Activated CD4-positive, alpha-beta T cell treated with anti-CD3 and anti-CD28 coated beads for 36 hours (primary cell): ENCODE measurements at regions of chr15 and their contacts with region 1.

Region 1: GRCh38 chr15:34987985-34988873 is at the start of gene ZNF770:
- DNase-seq: peak; percentile 88
- ATAC-seq: peak; percentile 87
- H3K4me3 Mint-ChIP-seq: peak within 1 kb of the TSS; percentile 97
- H3K27ac Mint-ChIP-seq: peak within 1 kb of the TSS; percentile 98
- H3K4me1 Mint-ChIP-seq: peaks cover 35% of the 10 kb centered on the region
- H3K27me3 Mint-ChIP-seq: no peaks in the 10 kb centered on the region
- total RNA-seq, gene ZNF770: 64.1 to 65.1 TPM

Region 2: GRCh38 chr15:34337557-34338306 is 650.5 kb before region 1 on chr15 and contains the start of gene SLC12A6:
- CTCF ChIA-PET with region 1: no interaction called
- POLR2A ChIA-PET with region 1: no interaction called
- intact Hi-C with region 1: loop called in 1 of 2 experiments (anchors 5 kb)
- DNase-seq: peak; percentile 95
- ATAC-seq: peak; percentile 82
- H3K4me3 Mint-ChIP-seq: peak within 1 kb of the TSS; percentile 83
- H3K27ac Mint-ChIP-seq: peak within 1 kb of the TSS; percentile 97
- H3K4me1 Mint-ChIP-seq: peaks cover 67% of the 10 kb centered on the region
- H3K27me3 Mint-ChIP-seq: no peaks in the 10 kb centered on the region
- total RNA-seq, gene SLC12A6: 18.2 to 22.1 TPM

Region 3: GRCh38 chr15:34969340-34970097 is 18.7 kb before region 1 on chr15 and contains the start of gene AQR:
- CTCF ChIA-PET with region 1: interaction called, 68 read pairs
- POLR2A ChIA-PET with region 1: interaction called, 45 read pairs
- intact Hi-C with region 1: loop called (anchors 1 kb)
- DNase-seq: peak; percentile 95
- ATAC-seq: peak; percentile 99
- H3K4me3 Mint-ChIP-seq: peak within 1 kb of the TSS; percentile 98
- H3K27ac Mint-ChIP-seq: peak within 1 kb of the TSS; percentile 91
- H3K4me1 Mint-ChIP-seq: peaks cover 35% of the 10 kb centered on the region
- H3K27me3 Mint-ChIP-seq: no peaks in the 10 kb centered on the region
- total RNA-seq, gene AQR: 39.2 to 62.0 TPM

Region 4: GRCh38 chr15:35080226-35080625 is 92.0 kb after region 1 on chr15:
- CTCF ChIA-PET with region 1: no interaction called
- POLR2A ChIA-PET with region 1: no interaction called
- intact Hi-C with region 1: no loop called
- DNase-seq: no peak
- ATAC-seq: no peak
- H3K4me3 Mint-ChIP-seq: no peak overlapping the region
- H3K27ac Mint-ChIP-seq: no peak overlapping the region
- H3K4me1 Mint-ChIP-seq: no peaks in the 10 kb centered on the region
- H3K27me3 Mint-ChIP-seq: peaks cover 7% of the 10 kb centered on the region

Region 5: DNA sequence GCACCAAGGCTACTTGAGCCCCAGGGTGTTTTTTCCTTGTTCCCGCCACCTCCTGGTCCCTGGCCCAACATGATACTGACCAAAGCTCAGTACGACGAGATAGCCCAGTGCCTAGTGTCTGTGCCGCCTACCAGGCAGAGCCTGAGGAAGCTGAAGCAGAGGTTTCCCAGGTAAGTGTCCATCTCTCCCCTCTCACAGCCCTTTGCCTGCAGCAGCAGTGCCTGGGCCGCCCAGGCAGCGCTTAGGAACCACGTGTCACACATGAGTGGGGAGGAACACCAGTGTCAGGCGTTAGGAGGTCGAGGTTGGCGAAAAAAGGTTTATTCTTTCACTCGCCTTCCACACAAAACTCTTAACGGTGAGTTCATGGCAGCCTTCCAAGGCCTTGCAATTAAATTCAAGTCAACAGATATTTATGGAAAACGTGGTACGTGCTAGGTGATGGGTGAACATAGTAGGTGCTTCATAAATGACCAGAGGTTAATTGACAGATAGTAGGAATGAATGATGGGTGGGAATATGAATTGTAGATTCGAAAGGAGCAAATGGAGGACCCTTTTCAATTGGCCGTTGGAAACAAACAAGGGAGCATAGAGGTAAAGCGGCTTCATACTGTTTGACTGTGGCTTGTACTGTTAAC is 1591.7 kb after region 1 on chr15:
- CTCF ChIA-PET with region 1: no interaction called
- POLR2A ChIA-PET with region 1: no interaction called
- intact Hi-C with region 1: loop called in 1 of 2 experiments (anchors 5 kb)
- DNase-seq: peak; percentile 53
- ATAC-seq: peak; percentile 23
- H3K4me3 Mint-ChIP-seq: peak overlapping the region; percentile 81
- H3K27ac Mint-ChIP-seq: peak overlapping the region; percentile 93
- H3K4me1 Mint-ChIP-seq: peaks cover 24% of the 10 kb centered on the region
- H3K27me3 Mint-ChIP-seq: peaks cover 2% of the 10 kb centered on the region